Activated T-helper 1 cell treated with anti-CD3 and anti-CD28 coated beads, Interleukin-12 subunit alpha, Interleukin-12 subunit beta, Interleukin-2, Interleukin-4 antibody, amounts not matched to agents 30 ng/mL and 10 ng/mL and 1 ng/mL, durations not matched to agents 14 hours and 24 hours and 36 hours (primary cell): ENCODE measurements at regions of chr6 and their contacts with region 1.

Region 1: GRCh38 chr6:38639498-38640215 is at the start of gene BTBD9:
- DNase-seq: peak; percentile 80
- H3K4me3 Mint-ChIP-seq: peak within 1 kb of the TSS; percentile 92
- H3K27ac Mint-ChIP-seq: peak within 1 kb of the TSS; percentile 91
- H3K4me1 Mint-ChIP-seq: peaks cover 47% of the 10 kb centered on the region
- H3K27me3 Mint-ChIP-seq: no peaks in the 10 kb centered on the region
- total RNA-seq, gene BTBD9: 14.5 and 16.4 TPM in 2 replicates

Region 2: GRCh38 chr6:37353761-37354525 is 1285.7 kb before region 1 on chr6 and contains the start of gene RNF8:
- intact Hi-C with region 1: loop called (anchors 1 kb)
- DNase-seq: peak; percentile 90
- H3K4me3 Mint-ChIP-seq: peak within 1 kb of the TSS; percentile 94
- H3K27ac Mint-ChIP-seq: peak within 1 kb of the TSS; percentile 90
- H3K4me1 Mint-ChIP-seq: peaks cover 47% of the 10 kb centered on the region
- H3K27me3 Mint-ChIP-seq: peaks cover 7% of the 10 kb centered on the region
- total RNA-seq, gene RNF8: 30.0 and 34.2 TPM in 2 replicates

Region 3: GRCh38 chr6:38713812-38714211 is 74.2 kb after region 1 on chr6:
- intact Hi-C with region 1: loop called (anchors 2 kb)
- DNase-seq: peak; percentile 75
- H3K4me3 Mint-ChIP-seq: peak overlapping the region; percentile 65
- H3K27ac Mint-ChIP-seq: peak overlapping the region; percentile 76
- H3K4me1 Mint-ChIP-seq: peaks cover 42% of the 10 kb centered on the region
- H3K27me3 Mint-ChIP-seq: peaks cover 5% of the 10 kb centered on the region